Panc1 (cell line): ENCODE measurements at regions of chr22 and their contacts with region 1.

Region 1: DNA sequence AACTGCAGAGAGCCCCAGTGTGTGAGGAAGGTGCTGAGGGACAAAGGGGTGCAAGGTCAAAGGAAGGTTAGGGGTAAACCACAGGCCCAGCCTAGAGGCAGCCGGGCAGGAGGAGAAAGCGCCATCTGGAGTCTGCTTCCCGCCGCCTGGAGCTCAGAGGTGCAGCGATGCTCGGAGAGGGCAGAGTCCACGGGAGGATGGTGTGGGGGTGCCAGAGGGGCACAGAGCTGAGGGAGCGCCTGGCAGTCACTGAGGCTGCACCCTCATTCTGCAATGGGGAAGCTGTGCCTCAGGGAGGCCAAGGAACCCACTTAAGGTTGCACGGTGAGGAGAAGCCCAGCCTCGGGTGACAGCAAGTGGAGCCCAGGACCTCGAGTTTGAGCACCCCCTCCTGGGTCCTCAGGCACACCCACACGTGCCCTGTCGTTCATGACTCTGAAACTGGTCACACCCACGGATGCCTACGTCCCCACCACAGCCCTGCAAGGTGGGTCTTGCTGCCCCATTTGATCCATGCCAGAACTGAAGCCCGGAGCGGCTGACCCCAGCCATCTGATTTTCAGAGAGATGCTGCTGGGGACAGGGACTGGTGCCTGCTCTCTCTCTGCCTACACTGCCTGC is 1.6 kb downstream of the IL2RB start:
- DNase-seq: no peak
- ATAC-seq: no peak
- H3K4me3 ChIP-seq: no peak overlapping the region
- H3K27ac ChIP-seq: no peak overlapping the region
- H3K4me1 ChIP-seq: peaks cover 3% of the 10 kb centered on the region
- H3K27me3 ChIP-seq: no peaks in the 10 kb centered on the region
- CTCF ChIP-seq: no peak

Region 2: DNA sequence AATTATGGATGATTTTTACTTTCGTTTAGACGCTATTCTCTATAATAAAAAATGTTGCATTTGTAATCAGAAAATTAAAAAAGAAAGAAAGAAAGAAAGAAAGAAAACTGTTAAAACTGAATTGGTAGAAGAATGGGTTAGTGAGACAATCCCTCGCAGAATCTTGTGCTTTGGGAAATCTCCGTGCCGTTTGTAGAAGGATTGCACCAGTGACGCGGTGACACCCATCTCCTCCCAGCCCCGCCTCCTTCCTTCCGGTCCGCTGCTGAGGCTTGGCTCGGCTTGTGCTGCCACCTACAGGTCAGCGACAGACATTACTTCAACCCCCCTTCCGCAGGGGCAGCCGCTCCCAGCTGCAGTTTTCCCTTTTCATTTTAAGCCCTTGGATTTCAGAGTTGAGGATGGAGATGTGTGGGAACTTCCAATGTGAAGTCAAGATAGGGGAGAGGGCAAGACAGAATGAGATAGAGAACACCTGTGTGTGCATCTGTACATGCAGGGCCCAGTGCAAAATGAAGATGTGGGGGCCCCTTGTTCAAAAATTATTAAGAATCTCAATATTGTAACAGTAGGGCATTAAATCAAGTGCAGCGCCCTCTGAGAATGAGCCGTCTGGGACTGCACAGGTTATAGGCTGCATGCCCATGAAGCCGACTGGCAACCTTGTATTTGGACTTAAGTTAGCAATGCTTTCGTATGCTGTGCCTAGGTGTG is 170.0 kb before region 1 on chr22:
- CTCF ChIA-PET with region 1: no interaction called
- POLR2A ChIA-PET with region 1: no interaction called
- in situ Hi-C with region 1: no loop called
- intact Hi-C with region 1: no loop called
- DNase-seq: peak; percentile 57
- ATAC-seq: peak; percentile 90
- H3K4me3 ChIP-seq: peak overlapping the region; percentile 34 to 57
- H3K27ac ChIP-seq: peak overlapping the region; percentile 1; the same call in 1 of the 2 replicates
- H3K4me1 ChIP-seq: no peaks in the 10 kb centered on the region
- H3K27me3 ChIP-seq: no peaks in the 10 kb centered on the region
- CTCF ChIP-seq: peak; percentile 83

Region 3: DNA sequence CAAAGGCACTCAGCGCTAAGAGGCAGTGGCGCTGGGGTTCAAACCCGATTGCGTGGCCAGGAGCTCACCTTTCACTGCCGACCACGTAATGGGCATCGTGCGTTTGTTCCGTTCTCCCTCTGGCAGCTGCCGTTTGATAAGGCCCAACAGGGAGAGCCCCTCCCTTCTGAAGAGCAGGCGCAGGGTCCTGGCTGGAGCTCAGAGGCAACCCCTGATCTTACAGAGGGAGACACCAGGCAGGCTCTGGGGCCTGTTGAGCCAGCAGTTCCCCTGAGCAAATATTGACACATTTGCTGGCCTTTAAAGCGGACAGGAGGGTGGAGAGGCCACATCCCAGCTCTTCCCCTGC is 51.6 kb after region 1 on chr22:
- CTCF ChIA-PET with region 1: no interaction called
- POLR2A ChIA-PET with region 1: no interaction called
- in situ Hi-C with region 1: no loop called
- intact Hi-C with region 1: no loop called
- DNase-seq: no peak
- ATAC-seq: peak; percentile 2; the same call in 1 of the 2 replicates
- H3K4me3 ChIP-seq: peak overlapping the region; percentile 12 to 45; a peak in 3 of 4 replicates
- H3K27ac ChIP-seq: peak overlapping the region; percentile 88
- H3K4me1 ChIP-seq: peaks cover 38% of the 10 kb centered on the region
- H3K27me3 ChIP-seq: no peaks in the 10 kb centered on the region
- CTCF ChIP-seq: peak; percentile 15

Region 4: GRCh38 chr22:37282385-37282677 is 134.2 kb after region 1 on chr22 and contains the start of gene CYTH4:
- CTCF ChIA-PET with region 1: no interaction called
- POLR2A ChIA-PET with region 1: no interaction called
- in situ Hi-C with region 1: no loop called
- intact Hi-C with region 1: no loop called
- DNase-seq: no peak
- ATAC-seq: peak; percentile 55; the same call in 1 of the 2 replicates
- H3K4me3 ChIP-seq: peak within 1 kb of the TSS in 1 of 2 experiments; percentile 31; a peak in 2 of 4 replicates
- H3K27ac ChIP-seq: no peak within 1 kb of the TSS
- H3K4me1 ChIP-seq: no peaks in the 10 kb centered on the region
- H3K27me3 ChIP-seq: no peaks in the 10 kb centered on the region
- CTCF ChIP-seq: no peak
- total RNA-seq, gene CYTH4: 1.3 TPM

Region 5: GRCh38 chr22:37330200-37331033 is 182.3 kb after region 1 on chr22:
- CTCF ChIA-PET with region 1: interaction called, 11 read pairs
- POLR2A ChIA-PET with region 1: no interaction called
- in situ Hi-C with region 1: no loop called
- intact Hi-C with region 1: no loop called
- DNase-seq: no peak
- ATAC-seq: peak; percentile 54
- H3K4me3 ChIP-seq: no peak overlapping the region
- H3K27ac ChIP-seq: no peak overlapping the region
- H3K4me1 ChIP-seq: peaks cover 2% of the 10 kb centered on the region; the same call in 1 of the 2 replicates
- H3K27me3 ChIP-seq: no peaks in the 10 kb centered on the region
- CTCF ChIP-seq: no peak